Natural killer cell (primary cell): ENCODE measurements at regions of chr11 and their contacts with region 1.

Region 1: DNA sequence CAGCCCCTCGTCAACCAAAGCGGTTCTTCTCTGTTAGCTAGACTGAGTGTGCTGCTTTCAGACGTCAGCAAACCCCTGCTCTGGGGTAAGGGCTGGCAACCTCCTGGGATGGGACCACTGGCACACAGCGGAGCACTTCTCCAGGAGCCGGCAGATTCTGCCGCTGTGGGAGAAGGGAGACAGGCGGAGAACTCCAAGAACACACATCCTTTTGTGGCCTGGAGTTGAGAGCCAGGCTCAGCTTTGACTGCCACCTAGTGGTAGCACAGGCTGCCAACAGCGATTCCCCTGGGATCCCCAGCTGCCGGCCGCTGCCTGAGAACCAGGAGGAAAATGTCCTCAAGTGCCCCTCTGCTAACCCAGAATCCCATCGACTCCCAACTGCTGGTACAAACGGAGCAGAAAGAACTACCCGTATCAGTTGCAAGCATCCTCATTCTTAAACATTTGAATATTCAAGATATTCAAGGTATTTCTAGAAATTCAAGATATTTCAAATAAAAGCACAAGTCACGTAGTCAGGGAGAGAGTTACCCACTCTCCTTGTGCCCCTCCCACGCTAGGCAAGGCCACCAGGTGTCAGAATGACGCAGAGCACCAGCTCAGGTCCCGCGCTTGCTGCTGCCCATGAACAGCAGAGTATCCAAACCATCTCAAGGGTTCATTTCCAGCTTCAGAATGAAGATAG is 4.9 kb downstream of the LTO1 start:
- DNase-seq: peak; percentile 34 to 78
- ATAC-seq: peak in 2 of 3 donors; percentile 17 to 23
- H3K4me3 ChIP-seq: no peak overlapping the region
- H3K4me3 Mint-ChIP-seq: peak overlapping the region; percentile 25
- H3K27ac ChIP-seq: no peak overlapping the region
- H3K27ac Mint-ChIP-seq: no peak overlapping the region
- H3K4me1 ChIP-seq: peaks cover 14% of the 10 kb centered on the region
- H3K4me1 Mint-ChIP-seq: peaks cover 29 to 41% of the 10 kb centered on the region in 2 donors
- H3K27me3 ChIP-seq: no peaks in the 10 kb centered on the region
- H3K27me3 Mint-ChIP-seq: no peaks in the 10 kb centered on the region
- CTCF ChIP-seq: peak; percentile 85

Region 2: DNA sequence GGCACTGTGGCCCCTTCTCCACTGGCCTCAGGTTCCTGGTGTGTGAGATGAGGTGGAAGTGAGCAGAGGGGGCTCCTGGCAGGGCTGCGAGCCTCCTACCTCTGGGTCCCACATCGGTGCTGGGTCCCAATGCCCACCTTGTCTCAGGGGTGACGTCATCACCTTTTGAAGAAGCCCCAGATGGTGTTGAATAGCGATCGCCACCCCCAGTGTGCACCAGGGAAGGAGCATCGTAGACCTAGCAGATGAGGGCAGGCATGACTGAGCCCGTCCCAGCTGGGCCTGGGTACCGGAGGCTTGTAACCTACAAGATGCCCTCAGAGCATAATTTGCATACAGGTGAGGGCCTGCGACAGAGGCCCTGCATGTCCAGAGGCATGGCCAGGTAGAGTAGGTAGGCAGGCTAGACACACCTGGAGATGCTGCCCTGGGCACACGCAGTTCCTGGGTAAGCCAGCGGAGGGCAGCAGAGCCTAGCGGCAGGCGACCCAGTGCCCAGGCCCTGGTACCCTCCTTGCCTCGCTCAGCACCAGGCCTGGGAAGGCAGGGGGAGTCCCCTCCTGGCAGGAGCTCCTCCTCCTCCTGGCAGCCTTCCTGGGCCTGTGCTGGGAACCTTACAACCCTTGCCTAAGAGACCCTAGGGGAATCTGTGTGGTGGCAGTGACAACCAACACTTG is 569.0 kb before region 1 on chr11:
- intact Hi-C with region 1: loop called (anchors 1 kb)
- DNase-seq: peak; percentile 67 to 88
- ATAC-seq: peak; percentile 74 to 99 (median 97)
- H3K4me3 ChIP-seq: no peak overlapping the region
- H3K4me3 Mint-ChIP-seq: no peak overlapping the region
- H3K27ac ChIP-seq: no peak overlapping the region
- H3K27ac Mint-ChIP-seq: no peak overlapping the region
- H3K4me1 ChIP-seq: no peaks in the 10 kb centered on the region
- H3K4me1 Mint-ChIP-seq: no peaks in the 10 kb centered on the region
- H3K27me3 ChIP-seq: peaks cover 3% of the 10 kb centered on the region
- H3K27me3 Mint-ChIP-seq: peaks cover 0 to 5% of the 10 kb centered on the region in 2 donors
- CTCF ChIP-seq: peak; percentile 82

Region 3: GRCh38 chr11:69540118-69540502 is 130.2 kb before region 1 on chr11:
- intact Hi-C with region 1: no loop called
- DNase-seq: no peak
- ATAC-seq: no peak
- H3K4me3 ChIP-seq: no peak overlapping the region
- H3K4me3 Mint-ChIP-seq: no peak overlapping the region
- H3K27ac ChIP-seq: no peak overlapping the region
- H3K27ac Mint-ChIP-seq: no peak overlapping the region
- H3K4me1 ChIP-seq: peaks cover 16% of the 10 kb centered on the region
- H3K4me1 Mint-ChIP-seq: peaks cover 0 to 8% of the 10 kb centered on the region in 2 donors
- H3K27me3 ChIP-seq: no peaks in the 10 kb centered on the region
- H3K27me3 Mint-ChIP-seq: peaks cover 7 to 9% of the 10 kb centered on the region in 2 donors
- CTCF ChIP-seq: no peak

Region 4: GRCh38 chr11:69642913-69643632 is 27.2 kb before region 1 on chr11:
- intact Hi-C with region 1: loop called (anchors 2 kb)
- DNase-seq: peak; percentile 82 to 89
- ATAC-seq: peak; percentile 79 to 88 (median 87)
- H3K4me3 ChIP-seq: peak overlapping the region; percentile 71
- H3K4me3 Mint-ChIP-seq: peak overlapping the region; percentile 80
- H3K27ac ChIP-seq: no peak overlapping the region
- H3K27ac Mint-ChIP-seq: peak overlapping the region in 1 of 2 donors; percentile 42
- H3K4me1 ChIP-seq: peaks cover 40% of the 10 kb centered on the region
- H3K4me1 Mint-ChIP-seq: peaks cover 9 to 21% of the 10 kb centered on the region in 2 donors
- H3K27me3 ChIP-seq: peaks cover 31% of the 10 kb centered on the region
- H3K27me3 Mint-ChIP-seq: peaks cover 19 to 26% of the 10 kb centered on the region in 2 donors
- CTCF ChIP-seq: peak; percentile 96

Region 5: DNA sequence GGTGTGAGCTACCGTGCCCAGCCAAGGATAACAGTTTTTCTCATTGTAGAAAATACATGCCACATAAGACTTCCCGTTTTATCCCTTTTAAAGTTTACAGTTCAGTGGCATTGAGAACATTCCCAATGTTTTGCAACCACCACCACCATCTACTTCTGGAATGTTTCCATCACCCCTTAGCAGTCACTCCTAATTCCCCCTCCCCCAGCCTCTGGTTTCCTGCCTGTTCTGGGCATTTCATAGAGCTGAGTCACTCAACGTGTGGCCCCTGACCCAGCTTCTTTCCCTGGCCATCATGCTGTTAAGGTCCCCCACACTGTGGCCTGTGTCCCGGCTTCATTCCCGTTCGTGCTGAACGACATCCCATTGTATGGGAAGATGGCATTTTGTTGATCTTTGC is 74.1 kb after region 1 on chr11:
- intact Hi-C with region 1: no loop called
- DNase-seq: no peak
- ATAC-seq: no peak
- H3K4me3 ChIP-seq: no peak overlapping the region
- H3K4me3 Mint-ChIP-seq: no peak overlapping the region
- H3K27ac ChIP-seq: no peak overlapping the region
- H3K27ac Mint-ChIP-seq: no peak overlapping the region
- H3K4me1 ChIP-seq: no peaks in the 10 kb centered on the region
- H3K4me1 Mint-ChIP-seq: no peaks in the 10 kb centered on the region
- H3K27me3 ChIP-seq: no peaks in the 10 kb centered on the region
- H3K27me3 Mint-ChIP-seq: peaks cover 0 to 7% of the 10 kb centered on the region in 2 donors
- CTCF ChIP-seq: no peak